ENCODE measurements at regions of chr6 and their contacts with region 1.

Region 1: GRCh38 chr6:3751730-3752542 is 423 bp upstream of the PXDC1 start:
- DNase-seq: peak; percentile 41
- H3K4me3 ChIP-seq: peak overlapping the region; percentile 55 to 97 (median 82)
- H3K27ac ChIP-seq: peak overlapping the region; percentile 92 to 98 (median 96)
- H3K4me1 ChIP-seq: peaks cover 22 to 64% (median 29%) of the 10 kb centered on the region in 3 donors
- H3K27me3 ChIP-seq: peaks cover 0 to 12% (median 0%) of the 10 kb centered on the region in 4 donors
- CTCF ChIP-seq: peak in 4 of 6 experiments; percentile 32 to 39 (median 36)
- POLR2A ChIP-seq: peak in 2 of 4 donors; percentile 84 to 89

Region 2: DNA sequence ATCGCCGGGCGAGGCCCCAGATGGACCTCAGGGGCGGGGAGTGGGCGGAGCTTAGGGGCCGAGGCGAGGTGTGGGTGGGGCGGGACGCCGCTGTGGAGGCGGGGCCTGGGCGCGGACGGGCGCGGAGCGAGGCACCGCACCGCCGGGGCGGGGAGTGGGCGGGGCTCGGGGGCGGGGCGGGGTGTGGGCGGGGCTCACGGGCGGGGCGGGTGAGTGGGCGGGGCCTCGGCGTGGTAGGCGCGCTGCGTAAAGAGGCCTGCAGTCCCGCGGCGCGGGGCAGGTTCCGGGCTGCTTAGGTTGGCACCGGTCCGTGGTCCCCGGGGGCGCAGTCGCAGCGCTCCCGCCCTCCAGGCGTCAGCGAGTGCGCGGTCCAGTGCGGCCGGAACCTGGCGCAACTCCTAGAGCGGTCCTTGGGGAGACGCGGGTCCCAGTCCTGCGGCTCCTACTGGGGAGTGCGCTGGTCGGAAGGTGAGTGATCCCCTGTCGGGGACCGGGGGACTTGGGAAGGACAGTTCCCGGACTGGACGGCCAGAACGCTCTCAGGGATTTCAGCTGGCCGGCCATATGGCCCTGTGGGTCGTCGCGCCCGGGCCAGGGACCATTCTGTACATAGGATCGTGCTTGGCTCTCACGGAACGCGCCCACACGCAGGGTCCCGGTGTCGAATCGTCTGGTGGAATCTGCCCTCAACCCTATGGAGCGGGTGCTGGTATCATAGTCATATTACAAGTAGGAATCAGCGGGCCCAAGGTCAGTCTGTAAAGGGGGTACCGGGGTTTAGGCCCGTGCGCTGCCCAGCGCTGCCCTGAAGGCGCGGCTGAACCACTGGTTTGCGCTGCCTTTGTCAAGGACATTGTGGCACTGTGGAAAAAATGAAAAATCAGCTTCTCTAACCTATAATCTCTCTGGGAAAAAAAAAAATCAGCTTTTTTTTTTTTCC is 752.0 kb before region 1 on chr6 and contains the start of gene NQO2:
- intact Hi-C with region 1: no loop called
- DNase-seq: peak; percentile 72
- H3K4me3 ChIP-seq: peak within 1 kb of the TSS; percentile 77 to 97 (median 90)
- H3K27ac ChIP-seq: peak within 1 kb of the TSS; percentile 93 to 96 (median 94)
- H3K4me1 ChIP-seq: peaks cover 14 to 36% (median 20%) of the 10 kb centered on the region in 3 donors
- H3K27me3 ChIP-seq: no peaks in the 10 kb centered on the region
- CTCF ChIP-seq: peak in 2 of 6 experiments; percentile 26 to 32
- POLR2A ChIP-seq: peak in 3 of 4 donors; percentile 83 to 96 (median 92)
- total RNA-seq, gene NQO2: 18.7 to 38.3 (median 26.5) TPM

Region 3: GRCh38 chr6:3650959-3651697 is 100.8 kb before region 1 on chr6:
- intact Hi-C with region 1: no loop called
- DNase-seq: no peak
- H3K4me3 ChIP-seq: no peak overlapping the region
- H3K27ac ChIP-seq: no peak overlapping the region
- H3K4me1 ChIP-seq: no peaks in the 10 kb centered on the region
- H3K27me3 ChIP-seq: no peaks in the 10 kb centered on the region
- CTCF ChIP-seq: no peak
- POLR2A ChIP-seq: no peak

Region 4: DNA sequence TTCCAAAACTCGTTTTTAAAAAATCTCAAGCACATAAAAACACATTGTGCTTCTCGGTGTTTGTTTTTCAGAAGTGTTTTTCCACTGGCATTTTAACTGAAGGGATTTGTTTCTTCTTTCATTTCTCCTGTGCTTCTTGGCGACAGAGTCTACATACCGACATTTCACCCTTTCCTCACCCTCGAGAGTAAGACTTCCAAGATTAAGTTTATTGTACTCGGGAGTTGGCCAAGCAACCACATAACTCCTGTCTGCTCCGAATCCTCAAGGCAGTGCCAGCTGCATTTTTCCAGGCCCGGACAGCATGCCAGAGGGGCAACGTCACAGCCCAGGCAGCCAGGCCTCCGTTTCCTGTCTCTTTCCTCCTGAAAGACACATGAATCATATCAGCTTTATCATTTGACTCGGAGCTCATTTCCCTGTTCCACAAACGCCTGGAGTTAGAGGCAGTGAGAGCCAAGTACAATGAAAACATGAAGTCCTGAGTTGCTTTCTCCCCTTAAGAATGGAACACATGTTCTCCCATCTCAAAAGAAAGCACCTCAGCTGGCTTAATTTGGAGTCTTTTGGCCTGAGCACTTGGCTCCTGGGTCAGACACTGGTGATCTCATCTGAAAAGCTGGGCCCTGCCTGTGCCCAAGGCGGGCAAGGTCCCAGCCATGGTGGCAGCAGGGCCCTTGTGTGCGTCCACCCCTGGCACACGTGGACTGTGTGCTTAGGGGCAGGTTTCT is 74.1 kb after region 1 on chr6:
- intact Hi-C with region 1: loop called (anchors 10 kb)
- DNase-seq: no peak
- H3K4me3 ChIP-seq: peak overlapping the region in 3 of 4 donors; percentile 9 to 37 (median 14)
- H3K27ac ChIP-seq: peak overlapping the region; percentile 80 to 94 (median 92)
- H3K4me1 ChIP-seq: peaks cover 24 to 57% (median 31%) of the 10 kb centered on the region in 3 donors
- H3K27me3 ChIP-seq: no peaks in the 10 kb centered on the region
- CTCF ChIP-seq: no peak
- POLR2A ChIP-seq: peak in 1 of 4 donors; percentile 13

Region 5: GRCh38 chr6:3990692-3991501 is 239.0 kb after region 1 on chr6:
- intact Hi-C with region 1: loop called (anchors 5 kb)
- DNase-seq: peak; percentile 6
- H3K4me3 ChIP-seq: peak overlapping the region; percentile 10 to 63 (median 42)
- H3K27ac ChIP-seq: peak overlapping the region; percentile 32 to 78 (median 73)
- H3K4me1 ChIP-seq: peaks cover 3 to 16% (median 4%) of the 10 kb centered on the region in 3 donors
- H3K27me3 ChIP-seq: no peaks in the 10 kb centered on the region
- CTCF ChIP-seq: peak; percentile 66 to 88 (median 76)
- POLR2A ChIP-seq: no peak

Measured in esophagus squamous epithelium (tissue), 5 donors.